Thyroid gland (tissue), 4 donors: ENCODE measurements at regions of chr16 and their contacts with region 1.

Region 1: DNA sequence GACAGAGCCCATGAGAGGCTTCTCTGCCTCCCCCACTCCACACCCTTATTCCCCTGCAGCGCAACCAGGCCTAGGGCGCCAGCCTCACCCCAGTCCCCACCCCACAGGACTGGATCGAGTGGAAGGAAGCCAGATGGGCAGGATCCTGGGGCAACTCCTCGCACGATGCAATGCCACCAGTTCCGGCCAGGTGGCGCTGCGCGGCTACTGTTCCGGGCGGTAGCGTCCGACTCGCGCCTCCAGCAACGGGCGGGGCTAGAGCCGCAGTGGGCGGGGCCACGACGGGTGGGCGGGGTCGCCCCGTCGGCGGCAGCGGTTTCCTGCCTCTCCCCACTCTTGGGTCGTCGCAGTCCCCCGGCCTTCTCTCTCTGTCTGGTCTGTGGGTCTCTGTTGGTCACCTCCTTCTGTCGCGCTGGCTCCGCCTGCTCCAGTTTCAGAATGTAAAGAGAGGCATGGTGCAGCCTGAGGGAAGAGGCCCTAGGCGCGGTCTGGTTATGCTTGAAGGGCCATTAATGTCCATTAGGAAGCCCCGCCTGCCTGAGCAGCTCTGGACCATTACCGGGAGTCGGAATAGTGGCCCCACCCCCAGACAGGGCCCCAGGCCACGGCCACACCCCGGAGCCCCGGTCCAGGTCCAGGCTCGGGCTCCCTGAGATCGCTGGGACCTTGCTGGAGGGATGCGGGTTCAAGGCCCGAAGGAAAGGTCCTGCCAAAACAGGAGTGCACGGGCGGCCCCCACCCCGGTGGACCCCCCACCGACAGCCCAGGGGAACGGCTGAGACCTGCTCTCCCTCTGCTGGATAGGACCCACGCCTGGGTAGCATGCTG is 3.4 kb upstream of the NHERF2 start:
- DNase-seq: peak; percentile 91
- H3K4me3 ChIP-seq: peak overlapping the region in 1 of 3 donors; percentile 17
- H3K27ac ChIP-seq: peak overlapping the region; percentile 31 to 68 (median 37)
- H3K4me1 ChIP-seq: peaks cover 11 to 49% of the 10 kb centered on the region in 2 donors
- H3K27me3 ChIP-seq: peaks cover 7% of the 10 kb centered on the region
- CTCF ChIP-seq: peak; percentile 89 to 99 (median 98)
- POLR2A ChIP-seq: peak in 1 of 2 donors; percentile 51

Region 2: DNA sequence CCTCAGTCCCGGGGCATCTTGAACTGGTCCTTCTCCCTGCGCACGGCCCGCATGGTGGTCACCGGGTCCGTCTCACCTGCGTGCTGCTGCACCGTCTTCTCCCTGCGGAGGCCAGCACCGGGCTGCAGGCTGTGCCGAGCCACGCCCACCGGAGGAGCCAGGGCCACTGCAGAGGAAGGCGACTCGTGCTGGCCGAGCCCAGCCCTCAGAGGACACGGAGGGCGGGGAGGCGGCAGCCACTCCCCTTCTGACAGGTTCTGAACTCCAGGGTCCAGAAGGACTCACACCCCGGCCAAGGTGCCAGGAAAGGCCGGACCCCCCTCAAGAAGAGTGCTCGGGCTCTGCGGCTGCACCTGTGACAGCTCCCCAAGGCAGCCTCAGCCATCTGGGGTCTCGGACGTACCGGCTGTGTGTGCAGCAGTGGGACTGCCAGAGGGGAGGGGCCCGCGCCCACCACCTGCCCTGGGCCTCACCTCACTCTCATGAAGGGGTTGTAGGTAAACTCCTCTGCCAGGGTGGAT is 214.0 kb before region 1 on chr16:
- intact Hi-C with region 1: no loop called
- DNase-seq: no peak
- H3K4me3 ChIP-seq: no peak overlapping the region
- H3K27ac ChIP-seq: no peak overlapping the region
- H3K4me1 ChIP-seq: no peaks in the 10 kb centered on the region
- H3K27me3 ChIP-seq: no peaks in the 10 kb centered on the region
- CTCF ChIP-seq: no peak
- POLR2A ChIP-seq: no peak

Region 3: GRCh38 chr16:1932050-1933028 is 91.0 kb before region 1 on chr16:
- intact Hi-C with region 1: no loop called
- DNase-seq: peak; percentile 37 to 42
- H3K4me3 ChIP-seq: no peak overlapping the region
- H3K27ac ChIP-seq: no peak overlapping the region
- H3K4me1 ChIP-seq: peaks cover 0 to 9% of the 10 kb centered on the region in 2 donors
- H3K27me3 ChIP-seq: no peaks in the 10 kb centered on the region
- CTCF ChIP-seq: peak in 2 of 6 experiments; percentile 21 to 28
- POLR2A ChIP-seq: no peak

Region 4: DNA sequence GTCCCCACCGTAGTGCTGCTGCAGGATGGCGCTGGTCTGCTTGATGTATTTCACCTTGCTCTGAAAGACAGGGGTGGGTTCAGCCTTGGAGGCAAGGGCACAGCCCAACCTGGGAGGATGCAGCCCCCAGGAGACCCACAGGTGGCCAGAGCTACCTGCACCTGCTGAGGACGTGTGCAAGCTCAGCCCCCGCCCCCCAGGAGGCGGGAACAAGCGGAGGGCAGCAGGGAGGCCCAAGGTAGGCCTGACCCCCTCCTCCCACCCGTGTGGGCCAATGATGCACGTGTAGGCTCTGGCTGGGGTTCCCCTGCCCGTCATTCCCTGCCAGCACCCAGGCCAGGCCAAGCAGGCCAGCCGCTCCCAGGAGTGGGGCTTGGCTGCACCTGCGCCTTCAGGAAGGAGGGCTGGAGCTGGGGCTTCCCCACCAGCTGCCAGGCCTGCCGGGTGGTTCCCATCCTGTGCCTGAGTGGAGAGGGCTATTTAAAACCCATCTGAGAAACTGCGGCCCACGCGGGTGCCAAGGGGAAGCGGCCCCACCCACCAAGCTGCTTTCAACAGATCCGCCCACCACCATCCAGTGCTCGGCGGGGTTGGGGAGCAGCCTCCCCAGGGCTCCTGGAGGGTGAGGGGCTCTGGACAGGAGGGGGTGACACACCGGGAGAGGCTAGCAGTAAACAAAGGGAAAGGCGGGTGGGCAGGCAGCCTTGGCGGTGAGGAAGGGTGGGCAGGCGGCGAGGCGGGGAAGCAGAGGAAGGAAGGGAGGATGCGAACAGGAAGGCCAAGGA is 20.5 kb after region 1 on chr16:
- intact Hi-C with region 1: loop called (anchors 2 kb)
- DNase-seq: peak in 1 of 2 donors; percentile 56
- H3K4me3 ChIP-seq: no peak overlapping the region
- H3K27ac ChIP-seq: peak overlapping the region in 2 of 3 donors; percentile 82 to 97
- H3K4me1 ChIP-seq: peaks cover 45 to 73% of the 10 kb centered on the region in 2 donors
- H3K27me3 ChIP-seq: no peaks in the 10 kb centered on the region
- CTCF ChIP-seq: no peak
- POLR2A ChIP-seq: no peak

Region 5: GRCh38 chr16:2150418-2151187 is 127.3 kb after region 1 on chr16:
- intact Hi-C with region 1: loop called (anchors 5 kb)
- DNase-seq: no peak
- H3K4me3 ChIP-seq: no peak overlapping the region
- H3K27ac ChIP-seq: no peak overlapping the region
- H3K4me1 ChIP-seq: peaks cover 47 to 58% of the 10 kb centered on the region in 2 donors
- H3K27me3 ChIP-seq: no peaks in the 10 kb centered on the region
- CTCF ChIP-seq: no peak
- POLR2A ChIP-seq: no peak